Spleen (tissue), 13 donors: ENCODE measurements at regions of chr7 and their contacts with region 1.

Region 1: GRCh38 chr7:37181550-37181932 is 267.1 kb downstream of the ELMO1 start:
- DNase-seq: no peak
- H3K4me3 ChIP-seq: no peak overlapping the region
- H3K27ac ChIP-seq: peak overlapping the region in 3 of 8 donors; percentile 8 to 32 (median 26)
- H3K4me1 ChIP-seq: peaks cover 0 to 35% (median 17%) of the 10 kb centered on the region in 6 donors
- H3K27me3 ChIP-seq: no peaks in the 10 kb centered on the region
- CTCF ChIP-seq: no peak
- POLR2A ChIP-seq: no peak

Region 2: GRCh38 chr7:36487756-36488336 is 693.7 kb before region 1 on chr7:
- intact Hi-C with region 1: loop called (anchors 10 kb)
- DNase-seq: no peak
- H3K4me3 ChIP-seq: no peak overlapping the region
- H3K27ac ChIP-seq: no peak overlapping the region
- H3K4me1 ChIP-seq: no peaks in the 10 kb centered on the region
- H3K27me3 ChIP-seq: no peaks in the 10 kb centered on the region
- CTCF ChIP-seq: peak; percentile 32 to 82 (median 74)
- POLR2A ChIP-seq: no peak

Region 3: GRCh38 chr7:36967387-36967786 is 214.2 kb before region 1 on chr7:
- intact Hi-C with region 1: loop called (anchors 5 kb)
- DNase-seq: no peak
- H3K4me3 ChIP-seq: no peak overlapping the region
- H3K27ac ChIP-seq: peak overlapping the region in 2 of 8 donors; percentile 37 to 84
- H3K4me1 ChIP-seq: peaks cover 5 to 65% (median 41%) of the 10 kb centered on the region in 6 donors
- H3K27me3 ChIP-seq: no peaks in the 10 kb centered on the region
- CTCF ChIP-seq: peak; percentile 33 to 83 (median 65)
- POLR2A ChIP-seq: no peak

Region 4: DNA sequence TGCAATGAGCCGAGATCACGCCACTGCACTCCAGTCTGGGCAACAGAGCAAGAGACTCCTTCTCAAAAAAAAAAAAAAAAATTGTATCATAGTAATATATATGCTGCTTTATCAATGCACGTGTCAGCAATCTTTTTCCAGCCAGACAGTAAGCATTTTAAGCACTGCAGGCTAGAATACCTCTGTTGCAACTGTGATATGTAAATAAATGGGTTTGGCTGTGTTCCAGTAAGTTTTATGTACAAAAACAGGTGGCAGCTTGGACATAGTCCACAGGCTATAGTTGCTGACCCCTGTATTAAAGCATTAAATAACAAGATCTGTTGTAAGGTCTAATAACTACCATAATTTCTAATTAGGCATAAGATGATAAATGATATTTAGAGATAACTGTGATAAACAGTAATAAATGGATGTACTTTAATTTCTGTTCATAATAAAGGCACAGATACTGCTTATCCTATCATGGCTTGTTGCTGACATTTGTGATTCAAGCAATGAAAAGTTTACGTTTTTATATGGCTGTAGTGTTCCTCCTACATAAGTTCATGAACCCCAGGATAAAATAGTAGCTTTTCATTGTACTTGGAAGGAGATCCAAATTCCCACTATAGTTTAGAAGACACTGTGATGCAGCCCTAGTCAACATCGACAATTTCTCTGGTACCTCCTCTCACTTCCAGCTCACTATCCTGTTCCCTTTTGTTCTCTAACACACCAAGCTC is 105.8 kb after region 1 on chr7:
- intact Hi-C with region 1: no loop called
- DNase-seq: no peak
- H3K4me3 ChIP-seq: no peak overlapping the region
- H3K27ac ChIP-seq: peak overlapping the region in 4 of 8 donors; percentile 15 to 50 (median 28)
- H3K4me1 ChIP-seq: peaks cover 28 to 82% (median 57%) of the 10 kb centered on the region in 6 donors
- H3K27me3 ChIP-seq: no peaks in the 10 kb centered on the region
- CTCF ChIP-seq: no peak
- POLR2A ChIP-seq: no peak